ENCODE measurements at regions of chr4 and their contacts with region 1.

Region 1: GRCh38 chr4:75514131-75514948 is at the starts of genes RCHY1 and THAP6:
- DNase-seq: peak; percentile 87 to 89
- H3K4me3 ChIP-seq: peak within 1 kb of the TSS; percentile 95
- H3K27ac ChIP-seq: peak within 1 kb of the TSS; percentile 81
- H3K4me1 ChIP-seq: peaks cover 29% of the 10 kb centered on the region
- H3K27me3 ChIP-seq: no peaks in the 10 kb centered on the region
- CTCF ChIP-seq: no peak
- total RNA-seq, gene RCHY1: 7.1 and 7.3 TPM in 2 replicates
- total RNA-seq, gene THAP6: 11.9 and 16.7 TPM in 2 replicates

Region 2: DNA sequence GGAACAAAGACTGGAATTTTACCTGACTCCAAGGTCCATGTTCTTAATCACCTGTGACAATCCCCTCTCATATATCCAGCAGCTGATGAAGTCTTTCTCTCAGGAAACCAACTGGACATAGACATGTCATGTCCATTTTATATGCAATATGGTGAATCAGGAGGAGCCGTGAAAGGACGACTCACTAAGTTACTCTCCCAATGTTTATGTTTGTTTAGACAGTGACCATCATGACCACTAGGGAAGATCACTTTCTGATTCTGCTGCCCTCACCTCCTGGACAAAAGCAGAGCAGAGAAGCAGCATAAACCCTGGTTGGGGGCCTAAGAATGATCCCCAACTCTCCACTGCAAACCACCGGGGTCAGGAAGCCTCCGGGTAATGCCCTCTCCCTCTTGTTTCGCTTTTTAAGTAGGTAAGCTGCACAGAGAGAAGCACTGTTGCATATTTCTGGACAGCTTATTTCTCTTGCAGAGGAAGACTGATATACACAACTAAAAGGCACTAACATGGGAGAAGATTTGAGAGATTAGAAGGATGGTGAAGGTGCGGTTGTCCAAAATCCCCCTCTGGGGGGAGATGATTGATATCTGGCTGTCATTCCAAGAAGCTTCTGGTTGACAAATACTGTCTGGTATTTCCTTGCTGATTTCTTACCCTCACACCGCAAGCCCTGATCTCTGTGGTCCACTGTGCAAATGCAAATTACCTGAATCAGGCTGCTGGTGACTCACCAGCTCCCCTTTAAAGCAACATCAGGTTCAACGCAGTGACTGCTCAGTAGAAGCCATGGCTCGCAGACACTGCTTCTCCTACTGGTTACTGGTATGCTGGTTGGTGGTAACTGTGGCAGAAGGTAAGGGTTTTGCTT is 41.2 kb after region 1 on chr4 and contains the start of gene ODAPH:
- CTCF ChIA-PET with region 1: interaction called, 3 read pairs
- POLR2A ChIA-PET with region 1: no interaction called
- intact Hi-C with region 1: loop called (anchors 5 kb)
- DNase-seq: peak; percentile 41 to 77
- H3K4me3 ChIP-seq: peak within 1 kb of the TSS; percentile 50
- H3K27ac ChIP-seq: peak within 1 kb of the TSS; percentile 50
- H3K4me1 ChIP-seq: peaks cover 18% of the 10 kb centered on the region
- H3K27me3 ChIP-seq: no peaks in the 10 kb centered on the region
- CTCF ChIP-seq: peak; percentile 55
- total RNA-seq, gene ODAPH: 0.24 TPM in 1 of 2 replicates, not detected in the other

Measured in PC-9 (cell line).